Activated B cell treated with CpG ODN at 0.5 μM for 24 hours (primary cell): ENCODE measurements at regions of chr19 and their contacts with region 1.

Region 1: GRCh38 chr19:48271531-48272151 is 1.8 kb downstream of the ZNF114 start:
- DNase-seq: peak; percentile 37
- ATAC-seq: peak; percentile 75
- H3K4me3 Mint-ChIP-seq: peak overlapping the region; percentile 95
- H3K27ac Mint-ChIP-seq: peak overlapping the region; percentile 80
- H3K4me1 Mint-ChIP-seq: peaks cover 14% of the 10 kb centered on the region
- H3K27me3 Mint-ChIP-seq: no peaks in the 10 kb centered on the region
- CTCF ChIP-seq: no peak

Region 2: DNA sequence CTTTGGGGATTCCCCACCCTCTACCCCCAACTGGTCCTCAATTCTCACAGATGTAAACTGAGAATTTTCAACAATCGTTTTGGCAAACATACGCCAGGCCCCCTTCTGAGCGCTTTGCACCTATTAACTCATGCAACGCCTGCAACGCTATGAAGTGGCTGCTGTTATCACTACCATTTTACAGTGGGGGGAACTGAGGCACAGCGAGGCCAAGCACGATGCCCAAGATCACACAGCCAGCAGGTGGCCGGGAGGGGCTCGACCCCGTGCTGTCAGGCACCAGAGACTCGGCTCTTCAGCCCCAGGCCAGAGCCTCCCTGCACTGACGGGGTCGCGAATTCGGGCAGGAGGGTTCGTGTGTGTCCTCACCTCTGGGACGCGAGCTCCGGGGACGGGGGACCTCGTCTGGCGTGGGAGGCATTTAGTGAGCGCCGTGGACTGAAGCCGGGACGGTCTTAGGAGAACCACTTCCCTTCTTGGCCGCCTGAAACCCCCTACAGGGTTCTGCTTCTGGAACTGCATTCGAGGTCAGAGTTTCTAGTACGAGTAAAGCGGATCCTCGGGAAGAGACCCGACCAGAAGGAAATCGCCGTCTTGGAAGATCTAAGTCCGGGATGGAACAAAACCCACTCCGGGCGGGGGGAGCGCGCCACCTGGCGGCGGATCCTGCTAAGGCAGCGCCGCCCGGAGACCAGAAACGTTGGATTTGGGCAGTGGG is 19.3 kb after region 1 on chr19:
- CTCF ChIA-PET with region 1: interaction called, 10 read pairs
- POLR2A ChIA-PET with region 1: no interaction called
- intact Hi-C with region 1: loop called (anchors 1 kb)
- DNase-seq: peak; percentile 69
- ATAC-seq: peak; percentile 71
- H3K4me3 Mint-ChIP-seq: peak overlapping the region; percentile 81
- H3K27ac Mint-ChIP-seq: no peak overlapping the region
- H3K4me1 Mint-ChIP-seq: peaks cover 8% of the 10 kb centered on the region
- H3K27me3 Mint-ChIP-seq: no peaks in the 10 kb centered on the region
- CTCF ChIP-seq: peak; percentile 98

Region 3: DNA sequence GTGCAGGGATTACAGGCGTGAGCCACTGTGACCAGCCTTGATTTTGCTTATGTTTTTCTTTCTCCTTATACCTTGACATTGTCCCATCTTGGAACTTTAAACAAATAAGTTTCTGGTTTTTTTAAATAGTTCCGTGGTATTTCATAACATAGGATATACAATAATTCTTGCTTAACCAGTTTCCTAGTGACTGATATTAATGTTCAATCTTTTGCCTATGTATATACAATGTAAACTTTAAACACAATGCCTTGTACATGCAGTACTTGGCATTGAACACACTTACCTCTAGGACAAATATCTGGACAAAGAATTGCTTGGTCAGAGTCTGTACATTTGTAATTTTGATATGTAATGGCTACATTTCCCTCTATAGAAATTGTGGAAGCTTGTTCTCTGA is 310.5 kb after region 1 on chr19:
- CTCF ChIA-PET with region 1: interaction called, 21 read pairs
- POLR2A ChIA-PET with region 1: no interaction called
- intact Hi-C with region 1: loop called (anchors 1 kb)
- DNase-seq: no peak
- ATAC-seq: no peak
- H3K4me3 Mint-ChIP-seq: no peak overlapping the region
- H3K27ac Mint-ChIP-seq: no peak overlapping the region
- H3K4me1 Mint-ChIP-seq: peaks cover 6% of the 10 kb centered on the region
- H3K27me3 Mint-ChIP-seq: peaks cover 2% of the 10 kb centered on the region
- CTCF ChIP-seq: no peak